ENCODE measurements at regions of chr17 and their contacts with region 1.

Region 1: GRCh38 chr17:64025732-64026294 is 5.4 kb upstream of the ICAM2 start:
- DNase-seq: peak; percentile 69 to 84 (median 81)
- ATAC-seq: peak; percentile 82 to 90 (median 86)
- H3K4me3 ChIP-seq: no peak overlapping the region
- H3K27ac ChIP-seq: peak overlapping the region in 1 of 3 donors; percentile 6
- H3K4me1 ChIP-seq: peaks cover 0 to 4% (median 0%) of the 10 kb centered on the region in 4 donors
- H3K27me3 ChIP-seq: no peaks in the 10 kb centered on the region
- CTCF ChIP-seq: peak; percentile 77 to 92 (median 84)
- POLR2A ChIP-seq: no peak

Region 2: GRCh38 chr17:63911657-63912426 is 114.0 kb before region 1 on chr17:
- intact Hi-C with region 1: loop called in 1 of 2 experiments (anchors 5 kb)
- DNase-seq: peak in 1 of 3 donors; percentile 48
- ATAC-seq: peak; percentile 72 to 87 (median 81)
- H3K4me3 ChIP-seq: no peak overlapping the region
- H3K27ac ChIP-seq: no peak overlapping the region
- H3K4me1 ChIP-seq: no peaks in the 10 kb centered on the region
- H3K27me3 ChIP-seq: no peaks in the 10 kb centered on the region
- CTCF ChIP-seq: peak; percentile 54 to 79 (median 77)
- POLR2A ChIP-seq: no peak

Region 3: DNA sequence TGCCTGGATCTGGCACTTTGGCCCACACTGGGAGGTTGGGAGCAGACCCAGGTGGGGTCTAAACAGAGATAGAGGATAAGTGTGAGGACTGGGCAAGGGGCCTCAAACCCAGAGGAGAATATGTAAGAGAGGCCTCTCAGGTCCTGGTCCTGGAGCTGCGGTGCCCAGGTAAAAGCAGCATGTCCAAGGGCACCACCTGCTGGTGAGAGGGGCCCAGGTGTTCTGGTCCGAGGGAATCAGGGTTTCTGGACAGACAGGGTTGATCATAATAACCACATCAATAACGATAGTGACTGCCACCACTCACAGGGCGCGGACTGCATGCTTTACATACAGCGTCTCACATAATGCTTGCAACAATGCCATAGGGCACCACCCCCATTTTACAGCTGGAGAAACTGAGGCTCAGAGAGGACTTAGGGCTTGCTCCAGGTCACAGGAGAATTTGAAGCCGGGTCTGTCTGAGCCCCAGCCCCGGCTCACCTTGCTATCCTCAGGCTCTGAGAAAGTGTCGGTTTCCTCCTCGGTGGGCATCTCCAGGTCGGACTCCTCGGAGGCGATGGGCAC is 74.8 kb before region 1 on chr17:
- intact Hi-C with region 1: no loop called
- DNase-seq: peak in 1 of 3 donors; percentile 55
- ATAC-seq: peak; percentile 54 to 67 (median 64)
- H3K4me3 ChIP-seq: no peak overlapping the region
- H3K27ac ChIP-seq: no peak overlapping the region
- H3K4me1 ChIP-seq: no peaks in the 10 kb centered on the region
- H3K27me3 ChIP-seq: no peaks in the 10 kb centered on the region
- CTCF ChIP-seq: peak; percentile 40 to 75 (median 60)
- POLR2A ChIP-seq: no peak

Region 4: DNA sequence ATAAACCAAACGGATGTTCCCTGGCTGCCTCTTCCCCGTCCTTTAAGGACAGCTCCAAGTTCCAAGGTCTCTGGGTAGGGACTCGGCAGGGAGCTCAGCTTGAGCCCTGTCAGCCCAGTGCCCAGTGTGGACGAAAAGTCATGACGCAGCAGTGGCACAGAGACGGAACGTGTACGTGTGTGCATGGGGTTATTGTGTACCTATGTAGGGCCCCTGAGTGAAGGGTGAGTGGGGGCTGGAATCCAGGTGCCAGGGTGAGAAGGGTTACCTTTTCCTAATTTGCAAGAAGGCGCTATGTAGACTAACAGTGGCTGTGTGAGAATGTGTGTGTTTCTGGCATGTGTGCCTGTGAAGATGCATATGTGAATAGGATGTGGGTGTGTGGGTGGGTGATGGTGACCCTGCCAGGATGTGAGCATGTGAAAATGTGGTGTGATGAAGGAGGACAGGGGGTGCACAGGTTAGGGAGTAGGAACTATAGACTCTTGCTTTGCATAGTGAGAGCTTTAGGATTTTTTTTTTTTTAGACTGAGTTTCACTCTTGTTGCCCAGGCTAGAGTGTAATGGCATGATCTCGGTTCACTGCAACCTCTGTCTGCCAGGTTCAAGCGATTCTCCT is 59.1 kb before region 1 on chr17:
- intact Hi-C with region 1: no loop called
- DNase-seq: no peak
- ATAC-seq: peak in 1 of 4 donors; percentile 24
- H3K4me3 ChIP-seq: no peak overlapping the region
- H3K27ac ChIP-seq: no peak overlapping the region
- H3K4me1 ChIP-seq: no peaks in the 10 kb centered on the region
- H3K27me3 ChIP-seq: no peaks in the 10 kb centered on the region
- CTCF ChIP-seq: no peak
- POLR2A ChIP-seq: no peak

Region 5: DNA sequence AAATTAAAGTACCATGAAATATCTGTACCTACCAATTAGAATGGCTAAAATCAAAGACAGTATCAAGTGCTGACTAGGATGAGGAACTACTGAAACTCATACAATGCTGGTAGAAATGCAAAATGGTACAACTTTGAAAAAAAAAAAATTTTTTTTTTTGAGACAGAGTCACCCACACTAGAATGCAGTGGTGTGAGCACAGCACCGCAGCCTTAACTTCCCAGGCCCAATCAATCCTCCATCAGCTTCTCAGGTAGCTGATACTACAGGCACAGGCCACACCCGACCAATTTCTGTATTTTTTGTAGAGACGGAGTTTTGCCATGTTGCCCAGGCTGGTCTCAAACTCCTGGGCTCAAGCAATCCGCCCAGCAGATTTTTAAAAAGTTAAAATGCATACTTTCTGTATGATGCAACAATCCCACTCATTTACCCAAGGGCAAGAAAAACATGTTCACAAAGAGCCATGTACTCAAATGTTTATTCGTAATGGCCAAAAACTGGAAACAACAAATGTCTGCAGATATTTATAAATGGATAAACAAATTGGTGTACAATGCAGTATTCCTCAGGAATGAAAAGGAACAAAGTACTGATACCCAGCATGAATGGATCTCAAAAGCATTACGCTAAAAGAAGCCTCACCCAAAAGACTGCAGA is 627.6 kb after region 1 on chr17:
- intact Hi-C with region 1: no loop called
- DNase-seq: no peak
- ATAC-seq: no peak
- H3K4me3 ChIP-seq: no peak overlapping the region
- H3K27ac ChIP-seq: no peak overlapping the region
- H3K4me1 ChIP-seq: peaks cover 0 to 4% (median 0%) of the 10 kb centered on the region in 4 donors
- H3K27me3 ChIP-seq: no peaks in the 10 kb centered on the region
- CTCF ChIP-seq: no peak
- POLR2A ChIP-seq: no peak